ENCODE measurements at regions of chr18 and their contacts with region 1.

Region 1: GRCh38 chr18:42053188-42053781 is 98.3 kb downstream of the PIK3C3 start:
- DNase-seq: peak; percentile 79
- H3K4me3 Mint-ChIP-seq: no peak overlapping the region
- H3K27ac Mint-ChIP-seq: no peak overlapping the region
- H3K4me1 Mint-ChIP-seq: peaks cover 8% of the 10 kb centered on the region
- H3K27me3 Mint-ChIP-seq: no peaks in the 10 kb centered on the region

Region 2: DNA sequence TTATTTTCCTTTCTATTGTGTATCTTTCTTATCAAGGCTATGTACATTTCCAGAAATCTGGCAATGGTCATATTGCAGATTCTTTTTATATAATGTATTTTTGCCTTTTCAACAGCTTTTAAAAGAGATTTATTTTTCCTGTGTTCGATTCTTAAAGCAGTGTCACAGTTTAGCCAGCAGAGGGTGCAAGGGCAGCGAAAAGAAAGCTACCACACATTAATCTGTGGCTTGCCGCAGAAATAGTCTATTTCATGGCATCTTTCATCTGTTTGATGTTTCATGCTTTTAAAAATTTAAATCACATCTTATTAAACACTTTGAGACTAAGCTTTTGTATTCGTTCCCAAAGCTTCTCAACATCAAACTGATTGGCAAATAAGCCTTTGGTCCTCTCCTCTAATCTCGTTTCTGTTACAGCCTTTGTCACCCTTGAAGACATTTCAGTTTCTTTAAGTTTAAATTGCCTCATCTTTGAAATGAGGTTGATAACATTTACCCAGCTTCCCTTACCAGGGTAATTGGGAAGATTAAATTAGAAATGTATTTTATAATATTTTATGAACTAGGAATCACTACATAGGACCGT is 24.9 kb before region 1 on chr18:
- CTCF ChIA-PET with region 1: interaction called, 34 read pairs
- intact Hi-C with region 1: loop called (anchors 2 kb)
- DNase-seq: peak; percentile 47
- H3K4me3 Mint-ChIP-seq: no peak overlapping the region
- H3K27ac Mint-ChIP-seq: no peak overlapping the region
- H3K4me1 Mint-ChIP-seq: peaks cover 23% of the 10 kb centered on the region
- H3K27me3 Mint-ChIP-seq: no peaks in the 10 kb centered on the region

Region 3: GRCh38 chr18:42064109-42064508 is 10.8 kb after region 1 on chr18:
- CTCF ChIA-PET with region 1: interaction called, 24 read pairs
- intact Hi-C with region 1: no loop called
- DNase-seq: no peak
- H3K4me3 Mint-ChIP-seq: no peak overlapping the region
- H3K27ac Mint-ChIP-seq: no peak overlapping the region
- H3K4me1 Mint-ChIP-seq: no peaks in the 10 kb centered on the region
- H3K27me3 Mint-ChIP-seq: no peaks in the 10 kb centered on the region

Region 4: DNA sequence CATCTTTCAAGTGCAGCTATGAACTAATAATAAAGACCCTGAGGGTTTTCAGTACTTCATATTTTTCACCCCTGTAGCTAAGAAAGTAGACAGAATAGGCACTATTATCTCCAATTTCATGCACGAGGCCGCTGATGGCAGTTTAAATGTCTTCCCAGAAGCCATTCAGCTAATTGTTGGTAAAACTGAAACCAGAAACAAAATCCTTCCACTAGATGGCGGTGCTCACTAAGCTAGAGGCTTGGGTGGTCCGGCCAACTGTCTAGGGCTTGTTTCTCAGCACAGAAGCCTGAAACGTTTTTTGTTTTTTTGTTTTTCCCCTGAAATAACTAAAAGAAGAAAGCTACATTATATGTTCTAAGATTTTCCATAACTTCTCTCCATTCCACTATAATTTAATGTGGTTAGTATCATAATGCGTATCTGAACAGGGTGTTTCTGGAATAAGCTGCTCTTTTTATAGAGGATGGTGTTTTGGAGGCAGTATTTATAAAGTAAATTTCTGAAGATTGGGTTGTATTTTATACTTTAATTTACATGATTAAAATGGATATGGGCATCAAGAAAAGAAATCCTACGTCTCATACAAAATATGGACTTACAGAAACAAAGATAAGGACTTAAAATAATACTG is 61.1 kb after region 1 on chr18:
- CTCF ChIA-PET with region 1: interaction called, 13 read pairs
- intact Hi-C with region 1: loop called (anchors 1 kb)
- DNase-seq: peak; percentile 78
- H3K4me3 Mint-ChIP-seq: no peak overlapping the region
- H3K27ac Mint-ChIP-seq: no peak overlapping the region
- H3K4me1 Mint-ChIP-seq: peaks cover 10% of the 10 kb centered on the region
- H3K27me3 Mint-ChIP-seq: no peaks in the 10 kb centered on the region

Region 5: GRCh38 chr18:42298759-42299675 is 245.7 kb after region 1 on chr18:
- CTCF ChIA-PET with region 1: interaction called, 7 read pairs
- intact Hi-C with region 1: loop called (anchors 2 kb)
- DNase-seq: peak; percentile 79
- H3K4me3 Mint-ChIP-seq: no peak overlapping the region
- H3K27ac Mint-ChIP-seq: no peak overlapping the region
- H3K4me1 Mint-ChIP-seq: no peaks in the 10 kb centered on the region
- H3K27me3 Mint-ChIP-seq: peaks cover 7% of the 10 kb centered on the region

Region 6: DNA sequence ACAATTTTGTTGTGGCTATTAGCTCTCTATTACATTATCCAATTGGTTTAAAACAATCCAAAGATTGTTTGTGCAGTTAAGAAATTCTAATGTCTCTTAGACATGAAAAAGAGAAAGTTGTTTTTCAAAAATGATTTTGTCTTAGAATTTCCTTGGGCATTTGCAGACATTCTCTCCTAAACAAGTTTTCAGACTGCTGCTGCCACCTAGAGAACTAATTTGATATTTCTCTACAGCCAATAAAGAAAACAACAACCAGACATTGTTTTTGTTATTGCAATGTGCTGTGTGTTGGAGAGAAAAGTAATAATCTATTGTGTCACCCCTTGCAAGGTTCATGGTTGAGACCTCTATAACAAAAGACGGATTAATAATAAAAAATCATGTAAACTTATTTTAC is 1343.0 kb after region 1 on chr18:
- CTCF ChIA-PET with region 1: no interaction called
- intact Hi-C with region 1: loop called (anchors 10 kb)
- DNase-seq: no peak
- H3K4me3 Mint-ChIP-seq: no peak overlapping the region
- H3K27ac Mint-ChIP-seq: no peak overlapping the region
- H3K4me1 Mint-ChIP-seq: no peaks in the 10 kb centered on the region
- H3K27me3 Mint-ChIP-seq: no peaks in the 10 kb centered on the region

Region 7: DNA sequence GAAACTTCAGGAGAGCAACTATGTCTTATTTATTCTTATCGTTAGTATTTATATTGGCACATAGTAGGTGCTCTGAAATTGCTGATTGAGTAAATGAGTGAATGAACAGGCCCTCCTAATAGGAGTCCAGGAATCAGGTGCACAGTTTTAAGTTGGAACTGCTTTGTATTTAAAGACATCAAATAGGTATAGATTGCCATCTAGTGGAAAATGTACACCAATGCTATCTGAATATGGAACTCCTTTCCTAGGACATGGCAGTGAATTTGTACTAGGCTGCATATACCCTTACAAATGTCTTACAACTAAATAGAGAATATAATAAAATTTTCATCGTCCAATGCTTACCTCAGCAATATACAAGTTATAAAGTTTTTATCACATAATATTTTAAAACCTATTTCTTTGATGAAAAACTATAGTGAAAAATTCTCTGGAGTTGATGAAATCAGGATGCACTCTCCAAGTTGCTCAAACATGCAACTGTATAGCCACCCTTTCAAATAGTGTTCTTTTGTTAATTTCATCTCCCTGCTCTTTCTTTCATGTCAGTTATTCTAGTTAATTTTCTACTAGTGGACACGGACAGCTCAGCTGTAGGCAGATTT is 1542.9 kb after region 1 on chr18:
- CTCF ChIA-PET with region 1: no interaction called
- intact Hi-C with region 1: loop called (anchors 1 kb)
- DNase-seq: no peak
- H3K4me3 Mint-ChIP-seq: no peak overlapping the region
- H3K27ac Mint-ChIP-seq: no peak overlapping the region
- H3K4me1 Mint-ChIP-seq: no peaks in the 10 kb centered on the region
- H3K27me3 Mint-ChIP-seq: peaks cover 3% of the 10 kb centered on the region